ENCODE measurements at regions of chr7 and their contacts with region 1.

Region 1: GRCh38 chr7:240791-241421 is 48.5 kb downstream of the FAM20C start:
- DNase-seq: peak; percentile 88 to 96
- H3K4me3 ChIP-seq: peak overlapping the region; percentile 20; the same call in 1 of the 2 replicates
- H3K27ac ChIP-seq: peak overlapping the region; percentile 75
- H3K4me1 ChIP-seq: peaks cover 35% of the 10 kb centered on the region
- H3K27me3 ChIP-seq: no peaks in the 10 kb centered on the region
- CTCF ChIP-seq: no peak

Region 2: DNA sequence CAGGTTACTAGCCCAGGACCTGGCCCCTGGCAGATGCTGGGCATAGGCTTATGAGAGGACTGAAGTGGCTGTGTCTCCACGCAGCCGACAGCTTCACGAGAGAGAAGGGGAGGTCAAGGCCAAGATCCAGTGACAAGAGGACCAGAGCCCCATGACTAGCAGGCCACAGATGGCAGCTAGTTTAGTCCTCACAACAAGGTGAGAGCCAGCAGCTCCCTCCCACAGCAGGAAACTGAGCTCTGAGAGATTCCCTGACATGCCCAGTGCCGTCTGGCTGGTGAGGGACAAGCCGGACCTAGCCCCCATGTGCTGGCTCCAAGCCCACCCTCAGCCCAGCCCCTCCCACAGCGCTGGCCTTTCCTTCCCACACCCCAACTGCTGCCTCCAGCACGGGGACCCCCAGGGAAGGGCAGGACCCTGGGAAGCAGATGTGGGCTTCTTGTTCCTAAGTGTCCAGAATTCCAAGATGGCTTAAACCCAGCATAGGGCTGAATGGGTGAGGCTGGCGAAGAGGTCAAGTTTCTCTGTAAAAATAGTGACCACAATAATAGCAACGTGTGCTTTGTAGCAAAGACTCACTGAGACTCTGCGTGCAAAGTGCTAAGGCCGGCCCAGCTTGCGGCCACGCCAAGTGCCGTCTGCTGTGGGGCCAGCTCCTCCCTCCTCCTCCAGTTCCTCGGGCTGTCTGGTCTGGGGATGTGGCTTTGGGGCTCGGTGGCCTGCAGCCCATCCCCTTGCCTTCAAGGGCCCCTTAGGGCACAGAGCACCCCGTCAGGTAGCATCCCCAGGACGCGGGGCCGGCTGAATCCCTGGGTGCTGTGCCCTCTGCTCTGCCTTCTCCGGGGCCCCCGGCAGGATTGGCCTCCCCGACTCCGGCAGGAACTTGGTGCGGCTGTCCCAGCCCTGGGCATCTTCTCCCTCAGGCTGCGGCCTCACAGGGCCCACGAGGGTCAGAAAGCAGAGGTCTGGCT is 56.3 kb before region 1 on chr7:
- CTCF ChIA-PET with region 1: no interaction called
- POLR2A ChIA-PET with region 1: no interaction called
- intact Hi-C with region 1: no loop called
- DNase-seq: no peak
- H3K4me3 ChIP-seq: no peak overlapping the region
- H3K27ac ChIP-seq: no peak overlapping the region
- H3K4me1 ChIP-seq: no peaks in the 10 kb centered on the region
- H3K27me3 ChIP-seq: peaks cover 31% of the 10 kb centered on the region
- CTCF ChIP-seq: no peak

Region 3: GRCh38 chr7:229184-229964 is 11.5 kb before region 1 on chr7:
- CTCF ChIA-PET with region 1: no interaction called
- POLR2A ChIA-PET with region 1: interaction called, 11 read pairs
- intact Hi-C with region 1: no loop called
- DNase-seq: no peak
- H3K4me3 ChIP-seq: no peak overlapping the region
- H3K27ac ChIP-seq: no peak overlapping the region
- H3K4me1 ChIP-seq: peaks cover 16% of the 10 kb centered on the region
- H3K27me3 ChIP-seq: no peaks in the 10 kb centered on the region
- CTCF ChIP-seq: no peak